T-cell (primary cell): ENCODE measurements at regions of chr12 and their contacts with region 1.

Region 1: DNA sequence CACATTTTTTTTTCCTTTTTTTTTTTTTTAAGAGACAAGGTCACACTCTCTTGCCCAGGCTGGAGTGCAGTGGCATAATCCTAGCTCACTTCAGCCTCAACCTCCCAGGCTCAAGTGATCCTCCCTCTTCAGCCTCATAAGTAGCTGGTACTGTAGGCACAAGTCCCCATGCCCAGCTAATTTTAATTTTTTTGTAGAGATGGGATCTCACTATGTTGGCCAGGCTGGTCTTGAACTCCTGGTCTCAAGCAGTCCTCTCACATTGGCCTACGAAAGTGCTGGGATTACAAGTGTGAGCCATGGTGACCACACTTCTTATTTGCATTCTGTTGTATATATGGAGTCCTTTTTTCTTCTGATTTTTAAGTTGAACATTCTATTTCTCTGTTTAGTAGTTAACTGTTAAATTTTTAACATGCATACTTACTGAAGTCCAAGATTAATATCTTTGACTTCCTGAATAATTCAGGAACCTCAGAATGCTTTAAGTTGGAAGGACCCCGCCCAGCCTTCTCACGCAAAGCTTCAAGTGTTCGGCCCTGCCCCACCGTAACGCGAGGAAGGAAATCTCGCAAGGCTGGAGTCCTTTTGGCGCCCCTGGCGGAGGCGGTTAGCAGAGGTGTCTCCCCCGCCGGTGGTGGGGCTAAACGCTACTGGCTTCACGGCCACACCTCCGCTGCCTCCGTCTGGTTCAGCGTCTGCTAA is 21.6 kb downstream of the SPATS2 start:
- DNase-seq: peak; percentile 32 to 78 (median 62)
- ATAC-seq: peak; percentile 91 to 100 (median 97)
- H3K4me3 ChIP-seq: no peak overlapping the region
- H3K4me3 Mint-ChIP-seq: peak overlapping the region in 2 of 3 donors; percentile 46 to 49
- H3K27ac ChIP-seq: no peak overlapping the region
- H3K27ac Mint-ChIP-seq: no peak overlapping the region
- H3K4me1 ChIP-seq: peaks cover 0 to 4% of the 10 kb centered on the region in 2 experiments
- H3K4me1 Mint-ChIP-seq: peaks cover 0 to 10% (median 0%) of the 10 kb centered on the region in 3 donors
- H3K27me3 ChIP-seq: no peaks in the 10 kb centered on the region
- H3K27me3 Mint-ChIP-seq: no peaks in the 10 kb centered on the region

Region 2: DNA sequence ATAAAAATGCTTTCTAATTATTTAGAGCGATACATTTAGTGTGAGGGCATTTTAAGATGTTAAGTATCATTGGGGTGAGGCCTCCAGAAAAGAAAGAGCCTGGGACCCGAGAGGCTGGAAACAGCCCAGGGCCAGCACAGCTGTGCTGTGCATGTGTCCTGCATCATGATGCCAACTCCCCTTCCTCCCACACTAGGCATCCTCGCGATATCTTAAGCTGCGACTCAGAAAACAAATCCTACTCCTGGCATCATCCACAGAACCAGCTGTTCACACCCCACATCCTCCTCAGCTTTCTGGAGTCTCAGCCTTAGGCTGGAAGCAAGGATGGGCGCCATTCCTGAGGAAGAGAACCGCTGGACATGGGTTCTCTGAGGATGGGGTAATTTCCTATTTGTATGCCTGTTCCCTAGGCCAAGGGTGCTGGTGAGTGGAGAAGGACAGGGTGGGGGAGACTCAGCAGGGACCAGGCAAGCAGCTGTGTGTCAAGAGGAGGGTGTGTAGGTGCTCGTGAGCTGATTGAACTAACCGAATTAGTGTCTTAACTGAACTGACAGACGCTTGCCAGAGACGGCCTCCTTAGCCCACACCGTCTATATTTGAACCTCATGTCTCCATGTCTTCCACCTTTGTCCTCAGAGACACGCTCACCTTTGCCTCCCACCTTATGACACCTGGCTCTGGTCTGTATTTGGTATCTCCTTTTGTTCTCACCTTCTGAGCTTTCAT is 194.7 kb after region 1 on chr12:
- CTCF ChIA-PET with region 1: interaction called in 1 of 2 experiments, 13 read pairs
- POLR2A ChIA-PET with region 1: no interaction called
- DNase-seq: no peak
- ATAC-seq: no peak
- H3K4me3 ChIP-seq: no peak overlapping the region
- H3K4me3 Mint-ChIP-seq: no peak overlapping the region
- H3K27ac ChIP-seq: no peak overlapping the region
- H3K27ac Mint-ChIP-seq: no peak overlapping the region
- H3K4me1 ChIP-seq: peaks cover 0 to 7% of the 10 kb centered on the region in 2 experiments
- H3K4me1 Mint-ChIP-seq: peaks cover 6 to 27% (median 8%) of the 10 kb centered on the region in 3 donors
- H3K27me3 ChIP-seq: no peaks in the 10 kb centered on the region
- H3K27me3 Mint-ChIP-seq: no peaks in the 10 kb centered on the region

Region 3: DNA sequence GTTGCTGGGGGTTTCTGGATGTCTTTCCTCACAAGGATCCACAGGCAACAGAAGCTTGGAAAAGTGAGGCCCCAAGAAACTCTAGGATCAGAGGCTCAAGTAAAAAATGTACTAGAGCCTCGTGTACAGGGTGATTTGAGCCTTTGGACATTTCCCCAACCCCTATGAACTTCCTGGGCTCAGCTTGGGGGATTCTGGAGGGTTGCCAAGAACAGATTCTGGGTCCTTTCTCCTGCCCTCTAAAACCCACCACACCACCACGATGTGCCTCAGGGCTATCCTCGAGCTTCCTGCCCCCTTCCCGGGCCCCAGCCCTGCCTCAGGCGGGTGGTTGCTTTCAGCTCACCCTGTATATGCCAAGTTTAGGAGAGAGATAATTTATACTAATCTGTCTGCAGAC is 216.0 kb after region 1 on chr12:
- CTCF ChIA-PET with region 1: no interaction called
- POLR2A ChIA-PET with region 1: no interaction called
- DNase-seq: no peak
- ATAC-seq: no peak
- H3K4me3 ChIP-seq: no peak overlapping the region
- H3K4me3 Mint-ChIP-seq: no peak overlapping the region
- H3K27ac ChIP-seq: no peak overlapping the region
- H3K27ac Mint-ChIP-seq: no peak overlapping the region
- H3K4me1 ChIP-seq: no peaks in the 10 kb centered on the region
- H3K4me1 Mint-ChIP-seq: peaks cover 0 to 6% (median 2%) of the 10 kb centered on the region in 3 donors
- H3K27me3 ChIP-seq: peaks cover 0 to 8% of the 10 kb centered on the region in 2 experiments
- H3K27me3 Mint-ChIP-seq: peaks cover 0 to under 1% of the 10 kb centered on the region in 2 donors

Region 4: GRCh38 chr12:51127050-51127729 is 1738.4 kb after region 1 on chr12:
- CTCF ChIA-PET with region 1: no interaction called
- POLR2A ChIA-PET with region 1: no interaction called
- DNase-seq: no peak
- ATAC-seq: no peak
- H3K4me3 ChIP-seq: no peak overlapping the region
- H3K4me3 Mint-ChIP-seq: no peak overlapping the region
- H3K27ac ChIP-seq: no peak overlapping the region
- H3K27ac Mint-ChIP-seq: no peak overlapping the region
- H3K4me1 ChIP-seq: no peaks in the 10 kb centered on the region
- H3K4me1 Mint-ChIP-seq: peaks cover 4 to 15% (median 8%) of the 10 kb centered on the region in 3 donors
- H3K27me3 ChIP-seq: no peaks in the 10 kb centered on the region
- H3K27me3 Mint-ChIP-seq: no peaks in the 10 kb centered on the region